ENCODE measurements at regions of chr7 and their contacts with region 1.

Region 1: GRCh38 chr7:40134428-40135316 is at the starts of genes MPLKIP and SUGCT:
- DNase-seq: peak; percentile 83
- H3K4me3 Mint-ChIP-seq: peak within 1 kb of the TSS; percentile 93
- H3K27ac Mint-ChIP-seq: peak within 1 kb of the TSS; percentile 93
- H3K4me1 Mint-ChIP-seq: peaks cover 17% of the 10 kb centered on the region
- H3K27me3 Mint-ChIP-seq: peaks cover 15% of the 10 kb centered on the region
- total RNA-seq, gene MPLKIP: 35.6 and 39.0 TPM in 2 replicates
- total RNA-seq, gene SUGCT: 0.43 and 1.2 TPM in 2 replicates

Region 2: DNA sequence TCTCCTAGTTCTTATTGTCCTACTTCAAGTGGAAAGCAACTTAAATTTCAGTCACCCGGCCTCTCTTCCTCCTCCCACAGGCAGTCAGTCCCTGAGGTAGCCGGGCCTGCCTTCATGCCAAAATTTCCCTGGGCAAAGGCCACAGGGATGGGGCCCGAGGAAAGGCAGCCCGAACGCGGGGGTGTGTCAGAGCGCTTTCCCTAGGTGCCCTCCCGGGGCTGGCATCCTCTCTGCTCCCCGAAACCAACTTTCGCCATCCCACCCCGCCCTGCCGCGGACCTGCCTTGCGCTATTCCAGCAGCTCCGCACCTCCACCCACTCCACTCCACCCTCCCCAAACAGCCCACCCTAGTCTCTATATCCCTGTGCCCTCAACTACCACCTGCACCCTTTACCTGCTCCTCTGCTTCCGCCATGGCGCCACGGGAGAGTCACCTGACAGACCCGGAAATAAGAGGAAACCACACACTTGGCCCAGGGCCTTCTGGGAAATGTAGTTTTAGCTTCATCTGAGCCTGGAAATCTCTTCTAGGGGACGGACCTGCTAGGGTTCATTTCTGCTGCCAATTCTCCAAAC is 1225.8 kb before region 1 on chr7 and contains the start of gene VPS41:
- intact Hi-C with region 1: loop called (anchors 10 kb)
- DNase-seq: peak; percentile 72
- H3K4me3 Mint-ChIP-seq: peak within 1 kb of the TSS; percentile 92
- H3K27ac Mint-ChIP-seq: peak within 1 kb of the TSS; percentile 90
- H3K4me1 Mint-ChIP-seq: peaks cover 32% of the 10 kb centered on the region
- H3K27me3 Mint-ChIP-seq: peaks cover 8% of the 10 kb centered on the region
- total RNA-seq, gene VPS41: 59.9 and 63.6 TPM in 2 replicates

Region 3: GRCh38 chr7:39566023-39566921 is 568.4 kb before region 1 on chr7 and contains the start of gene YAE1:
- intact Hi-C with region 1: loop called (anchors 5 kb)
- DNase-seq: peak; percentile 72
- H3K4me3 Mint-ChIP-seq: peak within 1 kb of the TSS; percentile 99
- H3K27ac Mint-ChIP-seq: peak within 1 kb of the TSS; percentile 96
- H3K4me1 Mint-ChIP-seq: peaks cover 18% of the 10 kb centered on the region
- H3K27me3 Mint-ChIP-seq: peaks cover 12% of the 10 kb centered on the region
- total RNA-seq, gene YAE1: 11.9 TPM in 2 replicates

Region 4: GRCh38 chr7:39732837-39733804 is 401.6 kb before region 1 on chr7:
- intact Hi-C with region 1: loop called (anchors 1 kb)
- DNase-seq: peak; percentile 95
- H3K4me3 Mint-ChIP-seq: peak overlapping the region; percentile 85
- H3K27ac Mint-ChIP-seq: peak overlapping the region; percentile 81
- H3K4me1 Mint-ChIP-seq: peaks cover 33% of the 10 kb centered on the region
- H3K27me3 Mint-ChIP-seq: peaks cover 4% of the 10 kb centered on the region

Region 5: GRCh38 chr7:39894904-39895303 is 239.8 kb before region 1 on chr7:
- intact Hi-C with region 1: loop called (anchors 10 kb)
- DNase-seq: no peak
- H3K4me3 Mint-ChIP-seq: no peak overlapping the region
- H3K27ac Mint-ChIP-seq: no peak overlapping the region
- H3K4me1 Mint-ChIP-seq: no peaks in the 10 kb centered on the region
- H3K27me3 Mint-ChIP-seq: peaks cover 18% of the 10 kb centered on the region

Region 6: GRCh38 chr7:40057292-40057691 is 77.4 kb before region 1 on chr7:
- intact Hi-C with region 1: no loop called
- DNase-seq: no peak
- H3K4me3 Mint-ChIP-seq: no peak overlapping the region
- H3K27ac Mint-ChIP-seq: no peak overlapping the region
- H3K4me1 Mint-ChIP-seq: peaks cover 5% of the 10 kb centered on the region
- H3K27me3 Mint-ChIP-seq: no peaks in the 10 kb centered on the region

Region 7: DNA sequence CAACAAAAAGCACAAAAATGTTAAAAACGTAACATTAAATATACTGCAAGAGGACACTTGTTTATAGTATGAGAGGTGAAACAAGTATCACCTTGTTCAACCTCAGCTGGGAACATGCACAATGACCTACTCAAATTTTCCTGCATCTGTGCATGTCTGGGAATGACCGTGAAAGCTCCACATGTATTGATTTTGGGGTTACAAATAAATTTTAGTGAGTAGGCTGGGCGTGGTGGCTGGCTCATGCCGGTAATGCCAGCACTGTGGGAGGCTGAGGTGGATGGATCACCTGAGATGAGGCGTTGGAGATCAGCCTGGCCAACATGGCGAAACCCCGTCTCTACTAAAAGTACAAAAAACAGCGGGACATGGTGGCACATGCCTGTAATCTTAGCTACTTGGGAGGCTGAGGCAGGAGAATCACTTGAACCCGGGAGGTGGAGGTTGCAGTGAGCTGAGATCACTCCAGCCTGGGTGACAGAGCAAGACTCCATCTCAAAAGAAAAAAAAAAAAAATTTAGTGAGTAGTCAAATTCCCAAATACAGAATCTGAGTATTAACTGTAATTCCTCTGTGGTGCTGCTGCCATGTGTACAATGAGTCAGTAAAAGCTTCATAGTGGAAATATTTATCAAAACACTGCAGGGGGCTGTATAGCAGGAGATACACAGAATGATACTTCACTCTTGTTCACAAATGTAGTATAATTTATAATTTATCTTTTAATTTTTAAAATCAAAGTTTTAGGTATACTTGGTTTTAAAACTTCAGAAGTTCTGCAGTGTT is 41.2 kb after region 1 on chr7:
- intact Hi-C with region 1: no loop called
- DNase-seq: no peak
- H3K4me3 Mint-ChIP-seq: no peak overlapping the region
- H3K27ac Mint-ChIP-seq: no peak overlapping the region
- H3K4me1 Mint-ChIP-seq: no peaks in the 10 kb centered on the region
- H3K27me3 Mint-ChIP-seq: no peaks in the 10 kb centered on the region

Measured in activated T-helper 2 cell treated with anti-CD3 and anti-CD28 coated beads, Interferon-gamma antibody, Interleukin-2, Interleukin-4, amounts not matched to agents 10 μg/mL and 5 μg/mL and 100 μg/mL, durations not matched to agents 14 hours and 24 hours and 36 hours (primary cell).